ENCODE measurements at regions of chr12 and their contacts with region 1.

Region 1: GRCh38 chr12:62581288-62582064 is 114.8 kb downstream of the MON2 start:
- DNase-seq: peak in 1 of 2 experiments; percentile 14
- H3K4me3 ChIP-seq: no peak overlapping the region
- H3K4me3 Mint-ChIP-seq: no peak overlapping the region
- H3K27ac Mint-ChIP-seq: no peak overlapping the region
- H3K4me1 ChIP-seq: no peaks in the 10 kb centered on the region
- H3K4me1 Mint-ChIP-seq: peaks cover 7% of the 10 kb centered on the region
- H3K27me3 ChIP-seq: no peaks in the 10 kb centered on the region
- H3K27me3 Mint-ChIP-seq: no peaks in the 10 kb centered on the region
- CTCF ChIP-seq: peak; percentile 37 to 75

Region 2: GRCh38 chr12:62543753-62544152 is 37.7 kb before region 1 on chr12:
- CTCF ChIA-PET with region 1: no interaction called
- POLR2A ChIA-PET with region 1: no interaction called
- intact Hi-C with region 1: no loop called
- DNase-seq: no peak
- H3K4me3 ChIP-seq: no peak overlapping the region
- H3K4me3 Mint-ChIP-seq: no peak overlapping the region
- H3K27ac Mint-ChIP-seq: no peak overlapping the region
- H3K4me1 ChIP-seq: no peaks in the 10 kb centered on the region
- H3K4me1 Mint-ChIP-seq: no peaks in the 10 kb centered on the region
- H3K27me3 ChIP-seq: no peaks in the 10 kb centered on the region
- H3K27me3 Mint-ChIP-seq: no peaks in the 10 kb centered on the region
- CTCF ChIP-seq: no peak

Region 3: GRCh38 chr12:62793256-62794217 is 212.1 kb after region 1 on chr12:
- CTCF ChIA-PET with region 1: interaction called, 6 read pairs
- POLR2A ChIA-PET with region 1: no interaction called
- intact Hi-C with region 1: loop called (anchors 1 kb)
- DNase-seq: peak; percentile 64 to 82
- H3K4me3 ChIP-seq: no peak overlapping the region
- H3K4me3 Mint-ChIP-seq: no peak overlapping the region
- H3K27ac Mint-ChIP-seq: no peak overlapping the region
- H3K4me1 ChIP-seq: peaks cover 32% of the 10 kb centered on the region
- H3K4me1 Mint-ChIP-seq: peaks cover 9% of the 10 kb centered on the region
- H3K27me3 ChIP-seq: no peaks in the 10 kb centered on the region
- H3K27me3 Mint-ChIP-seq: no peaks in the 10 kb centered on the region
- CTCF ChIP-seq: peak; percentile 80 to 91

Region 4: DNA sequence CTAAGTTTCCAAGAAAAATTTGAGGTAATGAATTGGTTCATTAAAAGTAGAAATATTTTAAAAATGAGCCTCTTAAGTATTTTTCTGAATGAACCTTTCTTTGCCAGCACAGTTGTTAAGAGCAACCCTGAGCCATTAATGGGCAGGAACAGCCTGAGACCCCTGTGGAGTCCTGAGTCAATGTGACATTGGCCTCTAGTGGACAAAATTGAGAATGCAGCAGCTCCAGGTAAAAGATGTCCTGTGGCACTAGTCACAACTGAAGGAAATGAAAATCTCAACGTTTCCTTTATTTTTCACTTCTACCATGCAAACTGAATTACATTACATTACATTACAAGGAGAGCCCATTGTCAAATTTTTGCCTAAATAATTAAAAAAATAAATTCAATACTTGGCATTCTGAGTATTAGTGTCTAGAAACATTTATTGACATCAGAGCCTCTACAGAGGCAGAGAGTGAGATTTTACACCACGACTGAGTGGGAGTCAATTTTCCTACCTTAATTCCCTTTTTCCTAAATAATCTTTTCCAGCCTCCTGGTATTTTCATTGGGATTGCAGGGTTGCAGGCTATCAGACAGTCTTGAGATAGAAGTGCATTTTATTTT is 217.8 kb after region 1 on chr12:
- CTCF ChIA-PET with region 1: interaction called, 12 read pairs
- POLR2A ChIA-PET with region 1: no interaction called
- intact Hi-C with region 1: loop called (anchors 1 kb)
- DNase-seq: peak; percentile 73 to 78
- H3K4me3 ChIP-seq: no peak overlapping the region
- H3K4me3 Mint-ChIP-seq: no peak overlapping the region
- H3K27ac Mint-ChIP-seq: peak overlapping the region; percentile 80
- H3K4me1 ChIP-seq: peaks cover 64% of the 10 kb centered on the region
- H3K4me1 Mint-ChIP-seq: peaks cover 37% of the 10 kb centered on the region
- H3K27me3 ChIP-seq: no peaks in the 10 kb centered on the region
- H3K27me3 Mint-ChIP-seq: no peaks in the 10 kb centered on the region
- CTCF ChIP-seq: peak; percentile 79 to 86

Region 5: GRCh38 chr12:63079791-63080502 is 498.5 kb after region 1 on chr12:
- CTCF ChIA-PET with region 1: no interaction called
- POLR2A ChIA-PET with region 1: no interaction called
- intact Hi-C with region 1: loop called (anchors 5 kb)
- DNase-seq: no peak
- H3K4me3 ChIP-seq: no peak overlapping the region
- H3K4me3 Mint-ChIP-seq: no peak overlapping the region
- H3K27ac Mint-ChIP-seq: no peak overlapping the region
- H3K4me1 ChIP-seq: peaks cover 39% of the 10 kb centered on the region
- H3K4me1 Mint-ChIP-seq: peaks cover 16% of the 10 kb centered on the region
- H3K27me3 ChIP-seq: no peaks in the 10 kb centered on the region; the same call in 1 of the 2 replicates
- H3K27me3 Mint-ChIP-seq: no peaks in the 10 kb centered on the region
- CTCF ChIP-seq: no peak

Measured in Caco-2 (cell line).